ENCODE measurements at regions of chr5 and their contacts with region 1.

Region 1: DNA sequence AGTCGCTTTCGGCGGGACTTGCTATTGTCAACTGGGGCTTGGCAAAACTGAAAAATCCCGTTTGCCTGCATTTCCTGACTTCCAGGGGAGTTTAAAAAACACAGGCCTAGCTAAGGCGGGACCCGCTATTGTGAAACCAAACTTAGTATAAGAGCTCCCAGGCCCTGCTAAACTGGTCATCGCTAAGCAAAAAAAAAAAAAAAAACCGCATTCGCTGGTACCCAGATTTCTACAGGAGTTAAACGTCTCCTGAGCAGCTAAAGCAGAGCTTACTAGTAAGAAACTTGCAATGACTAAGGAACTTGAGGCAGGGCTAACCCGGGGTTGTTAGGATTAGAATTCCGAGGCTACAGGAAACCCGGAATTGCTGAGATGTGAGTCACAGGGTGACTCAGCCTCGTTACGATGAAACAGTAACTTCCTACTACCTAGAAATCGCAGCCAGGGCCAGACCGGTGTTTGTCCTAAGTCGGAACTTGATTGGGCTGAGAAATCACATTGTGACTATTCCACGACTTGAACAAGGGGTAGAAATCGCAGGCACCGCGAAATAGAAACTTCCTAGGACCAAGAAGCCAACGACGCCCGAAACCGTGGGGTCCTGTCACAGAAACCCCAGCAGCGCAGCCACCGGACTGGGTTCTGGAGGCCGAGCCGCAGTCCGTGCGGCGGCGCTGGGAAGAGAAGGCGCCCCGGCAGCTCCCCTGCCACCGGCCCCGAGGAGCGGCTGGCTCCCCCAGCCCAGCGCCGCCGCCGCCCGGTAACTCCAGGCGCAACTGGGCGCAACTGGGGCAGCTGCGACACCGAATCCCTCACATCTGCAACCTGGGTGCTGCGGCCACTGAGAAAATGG is 89.5 kb downstream of the ANXA2R start:
- DNase-seq: peak; percentile 100
- ATAC-seq: peak; percentile 81
- H3K4me3 ChIP-seq: peak overlapping the region; percentile 64
- H3K27ac ChIP-seq: peak overlapping the region; percentile 94
- H3K4me1 ChIP-seq: peaks cover 30% of the 10 kb centered on the region
- H3K27me3 ChIP-seq: no peaks in the 10 kb centered on the region
- CTCF ChIP-seq: no peak

Region 2: GRCh38 chr5:41503310-41503709 is 1447.4 kb before region 1 on chr5:
- CTCF ChIA-PET with region 1: no interaction called
- POLR2A ChIA-PET with region 1: no interaction called
- intact Hi-C with region 1: no loop called
- DNase-seq: peak; percentile 68
- ATAC-seq: peak; percentile 92
- H3K4me3 ChIP-seq: no peak overlapping the region
- H3K27ac ChIP-seq: peak overlapping the region; percentile 9; the same call in 1 of the 2 replicates
- H3K4me1 ChIP-seq: peaks cover 35% of the 10 kb centered on the region
- H3K27me3 ChIP-seq: no peaks in the 10 kb centered on the region
- CTCF ChIP-seq: no peak

Region 3: DNA sequence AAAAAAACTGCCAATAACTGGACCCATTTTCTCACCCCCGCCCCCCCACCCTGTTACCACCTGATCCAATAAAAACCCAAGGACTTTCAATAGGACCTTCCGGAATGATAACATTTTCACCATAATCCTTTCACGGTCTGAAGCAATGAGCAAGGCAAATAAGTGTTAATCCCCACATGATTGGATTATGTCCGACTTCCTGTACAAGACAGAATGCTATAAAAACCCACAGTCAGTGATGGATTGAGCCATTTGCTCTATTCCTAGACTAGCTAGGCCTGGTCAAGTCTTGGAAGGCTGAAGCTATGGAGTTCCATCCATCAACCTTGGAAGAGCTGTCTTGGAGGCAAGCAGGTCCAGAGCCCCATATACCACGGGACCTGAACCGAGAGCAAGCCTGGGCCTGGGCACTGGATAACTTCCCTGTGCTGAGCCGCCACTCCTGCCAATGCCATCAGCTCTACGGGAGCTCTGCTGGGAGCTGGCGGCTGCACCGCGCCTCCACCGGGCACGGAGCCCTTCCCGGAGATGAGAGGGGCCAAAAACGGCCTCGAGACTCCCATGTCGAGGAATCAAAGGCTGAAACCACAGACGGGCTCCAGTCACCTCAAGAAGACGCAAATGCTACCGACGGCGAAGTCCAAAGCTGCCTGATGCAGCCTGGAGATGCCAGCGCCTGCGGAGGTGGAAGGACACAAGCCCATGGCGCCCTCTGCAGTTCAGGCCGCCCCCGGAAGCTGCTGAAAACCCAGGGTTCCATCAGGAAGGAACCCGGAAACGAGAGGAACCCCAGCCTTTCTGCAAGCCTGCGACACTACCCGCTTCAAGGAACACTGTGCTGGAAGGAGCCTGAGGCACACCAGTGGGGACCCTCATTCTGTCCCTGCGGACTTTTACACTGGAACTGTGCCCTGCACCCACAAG is 20.2 kb after region 1 on chr5:
- CTCF ChIA-PET with region 1: no interaction called
- POLR2A ChIA-PET with region 1: interaction called, 11 read pairs
- intact Hi-C with region 1: no loop called
- DNase-seq: peak; percentile 15
- ATAC-seq: no peak
- H3K4me3 ChIP-seq: no peak overlapping the region
- H3K27ac ChIP-seq: no peak overlapping the region
- H3K4me1 ChIP-seq: no peaks in the 10 kb centered on the region
- H3K27me3 ChIP-seq: no peaks in the 10 kb centered on the region
- CTCF ChIP-seq: peak; percentile 47; the same call in 1 of the 2 replicates

Region 4: DNA sequence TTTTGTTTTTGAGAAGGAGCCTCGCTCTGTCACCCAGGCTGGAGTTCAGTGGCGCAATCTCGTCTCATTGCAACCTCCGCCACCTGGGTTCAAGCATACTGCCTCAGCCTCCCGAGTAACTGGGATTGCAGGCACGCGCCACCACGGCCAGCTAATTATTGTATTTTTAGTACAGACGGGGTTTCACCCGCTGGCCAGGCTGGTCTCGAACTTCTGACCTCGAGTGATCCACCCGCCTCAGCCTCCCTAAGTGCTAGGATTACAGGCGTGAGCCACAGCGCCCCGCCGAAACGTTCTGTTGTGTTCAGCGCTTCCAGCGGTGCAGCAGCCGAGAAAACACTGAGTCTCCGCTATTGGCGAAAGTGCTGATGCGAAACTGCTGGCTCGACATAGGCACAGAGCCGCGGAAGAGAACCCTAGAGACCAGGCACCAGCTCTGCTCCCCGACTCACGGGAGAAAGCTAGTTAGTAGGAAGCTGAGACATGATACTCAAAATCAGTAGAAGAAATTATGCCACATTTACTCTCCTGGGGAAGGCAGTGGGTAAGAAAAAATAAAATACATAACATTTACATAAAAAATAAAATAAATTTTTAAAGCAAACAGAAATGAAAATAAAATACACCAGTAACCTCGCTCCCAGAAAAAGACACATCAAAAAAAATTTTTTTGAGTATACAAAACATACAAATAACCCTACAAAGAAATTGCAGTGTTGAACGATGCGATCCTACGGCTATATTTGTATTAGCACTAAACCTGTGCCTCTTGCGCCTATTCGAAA is 57.9 kb after region 1 on chr5:
- CTCF ChIA-PET with region 1: no interaction called
- POLR2A ChIA-PET with region 1: interaction called, 4 read pairs
- intact Hi-C with region 1: loop called (anchors 1 kb)
- DNase-seq: peak; percentile 98
- ATAC-seq: peak; percentile 64
- H3K4me3 ChIP-seq: peak overlapping the region; percentile 66
- H3K27ac ChIP-seq: peak overlapping the region; percentile 71
- H3K4me1 ChIP-seq: peaks cover 14% of the 10 kb centered on the region; the same call in 1 of the 2 replicates
- H3K27me3 ChIP-seq: no peaks in the 10 kb centered on the region
- CTCF ChIP-seq: peak; percentile 48; the same call in 1 of the 2 replicates

Region 5: GRCh38 chr5:43019614-43020293 is 69.1 kb after region 1 on chr5:
- CTCF ChIA-PET with region 1: interaction called, 3 read pairs
- POLR2A ChIA-PET with region 1: interaction called, 3 read pairs
- intact Hi-C with region 1: loop called (anchors 1 kb)
- DNase-seq: peak; percentile 97
- ATAC-seq: peak; percentile 66
- H3K4me3 ChIP-seq: peak overlapping the region; percentile 80
- H3K27ac ChIP-seq: peak overlapping the region; percentile 85
- H3K4me1 ChIP-seq: peaks cover 39% of the 10 kb centered on the region
- H3K27me3 ChIP-seq: no peaks in the 10 kb centered on the region
- CTCF ChIP-seq: peak; percentile 67

Measured in PC-3 (cell line).